ENCODE measurements at regions of chr11 and their contacts with region 1.

Region 1: GRCh38 chr11:9506489-9507276 is 45.9 kb downstream of the ZNF143 start:
- DNase-seq: peak; percentile 39
- H3K4me3 ChIP-seq: no peak overlapping the region
- H3K27ac ChIP-seq: no peak overlapping the region
- H3K27me3 ChIP-seq: no peaks in the 10 kb centered on the region
- CTCF ChIP-seq: peak; percentile 96

Region 2: GRCh38 chr11:9137293-9138132 is 369.2 kb before region 1 on chr11:
- CTCF ChIA-PET with region 1: interaction called, 22 read pairs
- POLR2A ChIA-PET with region 1: no interaction called
- DNase-seq: peak; percentile 41
- H3K4me3 ChIP-seq: no peak overlapping the region
- H3K27ac ChIP-seq: no peak overlapping the region
- H3K27me3 ChIP-seq: no peaks in the 10 kb centered on the region
- CTCF ChIP-seq: peak; percentile 99

Region 3: GRCh38 chr11:9200471-9200870 is 306.2 kb before region 1 on chr11:
- CTCF ChIA-PET with region 1: no interaction called
- POLR2A ChIA-PET with region 1: no interaction called
- DNase-seq: no peak
- H3K4me3 ChIP-seq: no peak overlapping the region
- H3K27ac ChIP-seq: no peak overlapping the region
- H3K27me3 ChIP-seq: no peaks in the 10 kb centered on the region
- CTCF ChIP-seq: no peak

Region 4: DNA sequence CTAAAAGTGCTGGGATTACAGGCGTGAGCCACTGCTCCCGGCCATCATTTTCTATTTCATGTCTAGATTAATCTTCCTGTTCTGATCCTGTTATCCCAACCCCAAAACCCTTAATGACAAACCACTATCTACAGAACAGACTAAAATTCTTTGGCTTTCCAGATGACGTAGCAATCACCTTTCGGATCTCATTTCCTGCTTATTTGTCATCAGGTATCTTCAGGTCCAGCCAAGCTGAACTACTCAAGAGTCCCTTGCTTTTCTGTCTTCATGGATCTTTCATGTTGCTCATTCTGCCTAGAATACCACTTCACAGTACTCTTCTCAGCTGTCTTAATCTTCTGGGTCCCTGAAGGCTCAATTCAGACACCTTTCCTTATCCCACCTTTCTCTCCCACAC is 149.6 kb before region 1 on chr11:
- CTCF ChIA-PET with region 1: no interaction called
- POLR2A ChIA-PET with region 1: no interaction called
- DNase-seq: no peak
- H3K4me3 ChIP-seq: no peak overlapping the region
- H3K27ac ChIP-seq: no peak overlapping the region
- H3K27me3 ChIP-seq: no peaks in the 10 kb centered on the region
- CTCF ChIP-seq: no peak

Region 5: GRCh38 chr11:9448576-9449352 is 57.9 kb before region 1 on chr11:
- CTCF ChIA-PET with region 1: interaction called, 12 read pairs
- POLR2A ChIA-PET with region 1: no interaction called
- DNase-seq: no peak
- H3K4me3 ChIP-seq: no peak overlapping the region
- H3K27ac ChIP-seq: no peak overlapping the region
- H3K27me3 ChIP-seq: no peaks in the 10 kb centered on the region
- CTCF ChIP-seq: no peak

Region 6: DNA sequence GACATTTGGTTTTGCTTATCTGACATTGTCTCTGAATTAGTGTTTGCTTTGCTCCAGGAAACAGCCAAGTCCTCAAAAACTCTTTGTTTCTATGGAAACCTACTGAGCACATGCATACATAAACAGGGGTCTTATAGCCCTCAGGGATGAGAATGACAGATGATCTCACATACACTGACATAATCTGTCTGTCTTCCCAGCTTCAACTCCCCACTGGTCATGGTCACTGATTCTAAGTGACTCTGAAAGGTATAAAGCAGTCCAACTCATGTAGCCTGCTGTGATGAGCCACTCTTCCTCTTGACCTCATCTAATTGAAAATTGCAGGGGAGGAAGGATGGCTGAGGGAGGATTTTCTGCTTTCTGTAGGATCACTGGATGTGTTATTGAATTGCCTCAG is 33.3 kb before region 1 on chr11:
- CTCF ChIA-PET with region 1: interaction called, 20 read pairs
- POLR2A ChIA-PET with region 1: no interaction called
- DNase-seq: no peak
- H3K4me3 ChIP-seq: no peak overlapping the region
- H3K27ac ChIP-seq: no peak overlapping the region
- H3K27me3 ChIP-seq: no peaks in the 10 kb centered on the region
- CTCF ChIP-seq: no peak

Region 7: GRCh38 chr11:9489080-9489765 is 17.5 kb before region 1 on chr11:
- CTCF ChIA-PET with region 1: interaction called, 61 read pairs
- POLR2A ChIA-PET with region 1: interaction called, 11 read pairs
- DNase-seq: peak; percentile 23
- H3K4me3 ChIP-seq: peak overlapping the region; percentile 20
- H3K27ac ChIP-seq: peak overlapping the region; percentile 63
- H3K27me3 ChIP-seq: no peaks in the 10 kb centered on the region
- CTCF ChIP-seq: no peak

Region 8: DNA sequence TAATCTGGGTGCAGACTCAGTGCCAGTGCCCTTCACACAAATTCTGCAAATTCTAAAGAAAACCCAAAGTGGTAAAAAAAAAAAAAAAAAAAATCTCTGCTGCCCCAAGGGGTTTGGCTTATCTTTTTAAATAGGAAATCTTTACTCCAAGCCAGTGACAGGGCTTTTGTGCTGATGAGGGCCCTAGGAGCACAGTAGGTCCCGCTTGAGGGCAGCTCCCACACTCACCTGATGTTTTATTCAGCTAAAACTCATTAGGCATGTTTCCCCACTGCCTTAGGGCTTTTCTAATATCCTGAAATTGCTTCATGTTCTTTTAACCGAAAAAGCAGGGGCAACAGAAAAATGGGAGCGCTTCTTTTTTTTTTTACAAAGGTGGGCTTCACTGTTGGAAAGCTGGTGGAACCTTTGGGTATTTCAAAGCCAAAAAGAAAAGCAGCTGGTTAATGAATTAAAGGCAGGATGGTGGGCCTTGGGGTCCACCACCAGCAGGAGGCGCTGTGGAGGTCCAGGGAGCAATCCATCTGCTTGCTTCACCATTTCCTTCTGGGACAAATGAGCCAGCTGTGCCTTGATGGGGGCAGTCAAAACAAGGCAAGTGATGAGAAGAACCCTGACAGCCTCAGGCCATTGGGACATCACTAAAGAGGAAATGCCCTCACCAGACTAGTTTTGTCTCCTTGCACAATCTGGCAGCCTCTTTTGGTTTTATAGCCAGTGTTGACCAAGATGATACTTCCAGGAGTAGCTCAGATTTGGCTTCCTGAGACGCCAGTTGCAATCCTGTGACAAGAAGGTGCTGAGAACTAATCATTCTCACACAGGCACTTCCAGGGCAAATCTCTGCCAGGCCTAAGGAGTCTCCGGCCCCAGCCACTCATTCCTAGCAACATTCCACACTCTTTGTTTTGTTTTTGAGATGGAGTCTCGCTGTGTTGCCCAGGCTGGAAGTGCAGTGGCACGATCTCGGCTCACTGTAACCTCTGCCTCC is 28.4 kb after region 1 on chr11:
- CTCF ChIA-PET with region 1: interaction called, 14 read pairs
- POLR2A ChIA-PET with region 1: no interaction called
- DNase-seq: no peak
- H3K4me3 ChIP-seq: no peak overlapping the region
- H3K27ac ChIP-seq: no peak overlapping the region
- H3K27me3 ChIP-seq: no peaks in the 10 kb centered on the region
- CTCF ChIP-seq: peak; percentile 74

Region 9: DNA sequence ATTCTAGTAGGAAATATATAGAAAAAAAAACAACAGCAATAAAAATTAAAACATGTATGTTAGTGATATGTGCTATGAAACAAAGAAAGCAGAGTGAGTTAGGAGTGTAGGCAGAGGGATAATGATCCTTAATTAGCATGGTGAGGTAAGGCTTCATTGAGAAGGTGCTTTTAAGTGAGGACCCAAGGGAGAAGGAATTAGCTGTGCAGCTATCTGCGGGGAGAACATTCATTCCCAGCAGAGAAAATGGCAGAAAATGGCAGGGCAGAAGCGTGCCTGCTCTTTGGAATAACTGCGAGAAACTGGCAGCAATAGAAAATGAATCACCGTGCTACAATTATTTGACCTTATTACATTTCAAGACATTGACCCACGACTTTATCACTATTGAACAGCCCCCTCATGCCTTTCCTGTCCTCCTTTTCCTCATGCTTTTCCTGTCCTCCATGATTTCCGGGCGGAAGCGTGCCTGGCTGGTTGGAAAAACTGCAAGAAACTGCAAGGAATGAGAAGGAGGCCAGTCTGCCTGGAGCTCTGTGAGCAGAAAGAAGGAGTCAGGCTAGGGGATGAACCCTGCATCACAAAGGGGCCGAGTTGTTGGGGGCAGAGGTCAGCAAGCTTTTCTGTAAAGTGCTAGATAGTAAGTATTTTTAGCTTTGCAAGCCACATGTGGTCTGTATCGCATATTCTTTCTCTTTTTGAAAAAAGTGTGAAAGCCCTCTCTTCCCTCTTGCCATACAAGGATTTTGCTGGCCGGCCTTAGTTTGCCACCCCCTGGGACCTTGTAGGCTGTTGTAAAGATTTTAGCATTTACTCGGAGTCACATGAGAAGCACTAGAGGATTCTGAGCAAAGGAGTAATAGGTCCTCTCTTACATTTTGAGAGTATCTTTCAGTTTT is 120.1 kb after region 1 on chr11:
- CTCF ChIA-PET with region 1: no interaction called
- POLR2A ChIA-PET with region 1: no interaction called
- DNase-seq: no peak
- H3K4me3 ChIP-seq: no peak overlapping the region
- H3K27ac ChIP-seq: no peak overlapping the region
- H3K27me3 ChIP-seq: no peaks in the 10 kb centered on the region
- CTCF ChIP-seq: no peak

Region 10: GRCh38 chr11:9703280-9703679 is 196.6 kb after region 1 on chr11:
- CTCF ChIA-PET with region 1: no interaction called
- POLR2A ChIA-PET with region 1: no interaction called
- DNase-seq: no peak
- H3K4me3 ChIP-seq: no peak overlapping the region
- H3K27ac ChIP-seq: no peak overlapping the region
- H3K27me3 ChIP-seq: no peaks in the 10 kb centered on the region
- CTCF ChIP-seq: no peak